ENCODE measurements at regions of chr2 and their contacts with region 1.

Region 1: DNA sequence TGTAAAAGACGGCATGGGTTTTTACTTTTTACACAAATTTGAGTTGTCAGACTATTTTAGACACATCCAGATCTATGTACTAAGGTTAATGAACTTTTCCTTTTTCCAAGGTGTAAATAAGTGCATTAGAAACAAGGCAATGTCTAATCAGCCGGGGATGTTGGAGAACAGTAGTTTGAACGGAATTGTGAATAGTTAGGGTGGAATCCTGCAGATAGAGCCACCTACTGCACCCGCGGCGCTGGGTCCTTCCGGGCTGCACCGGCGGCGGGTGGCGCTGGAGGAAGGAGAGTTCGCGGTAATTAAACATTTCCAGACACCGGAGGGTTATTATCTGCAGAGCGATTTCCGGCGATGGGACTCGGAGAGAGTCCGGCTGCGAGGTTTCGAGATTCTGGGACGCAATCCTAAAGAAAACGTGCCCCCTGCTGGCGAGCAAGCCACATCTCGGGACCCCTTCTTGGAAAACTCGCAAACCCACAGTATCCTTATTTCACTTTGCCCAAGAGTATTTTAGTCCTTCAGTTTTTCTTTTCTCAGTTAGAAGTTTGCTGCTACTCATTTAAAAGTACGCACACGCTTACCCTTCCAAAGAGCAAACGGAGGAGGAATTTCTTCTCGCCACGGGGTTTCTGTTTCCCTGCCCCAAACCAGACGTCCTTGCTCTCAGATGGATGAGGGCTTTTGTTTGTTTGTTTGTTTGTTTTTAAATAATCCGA is 4.5 kb upstream of the OSR1 start:
- DNase-seq: peak; percentile 81 to 88 (median 84)
- H3K4me3 ChIP-seq: peak overlapping the region; percentile 50
- H3K27ac ChIP-seq: no peak overlapping the region
- H3K4me1 ChIP-seq: peaks cover 4% of the 10 kb centered on the region
- H3K27me3 ChIP-seq: no peaks in the 10 kb centered on the region
- CTCF ChIP-seq: peak; percentile 60 to 74 (median 72)
- EP300 ChIP-seq: no peak
- POLR2A ChIP-seq: no peak

Region 2: DNA sequence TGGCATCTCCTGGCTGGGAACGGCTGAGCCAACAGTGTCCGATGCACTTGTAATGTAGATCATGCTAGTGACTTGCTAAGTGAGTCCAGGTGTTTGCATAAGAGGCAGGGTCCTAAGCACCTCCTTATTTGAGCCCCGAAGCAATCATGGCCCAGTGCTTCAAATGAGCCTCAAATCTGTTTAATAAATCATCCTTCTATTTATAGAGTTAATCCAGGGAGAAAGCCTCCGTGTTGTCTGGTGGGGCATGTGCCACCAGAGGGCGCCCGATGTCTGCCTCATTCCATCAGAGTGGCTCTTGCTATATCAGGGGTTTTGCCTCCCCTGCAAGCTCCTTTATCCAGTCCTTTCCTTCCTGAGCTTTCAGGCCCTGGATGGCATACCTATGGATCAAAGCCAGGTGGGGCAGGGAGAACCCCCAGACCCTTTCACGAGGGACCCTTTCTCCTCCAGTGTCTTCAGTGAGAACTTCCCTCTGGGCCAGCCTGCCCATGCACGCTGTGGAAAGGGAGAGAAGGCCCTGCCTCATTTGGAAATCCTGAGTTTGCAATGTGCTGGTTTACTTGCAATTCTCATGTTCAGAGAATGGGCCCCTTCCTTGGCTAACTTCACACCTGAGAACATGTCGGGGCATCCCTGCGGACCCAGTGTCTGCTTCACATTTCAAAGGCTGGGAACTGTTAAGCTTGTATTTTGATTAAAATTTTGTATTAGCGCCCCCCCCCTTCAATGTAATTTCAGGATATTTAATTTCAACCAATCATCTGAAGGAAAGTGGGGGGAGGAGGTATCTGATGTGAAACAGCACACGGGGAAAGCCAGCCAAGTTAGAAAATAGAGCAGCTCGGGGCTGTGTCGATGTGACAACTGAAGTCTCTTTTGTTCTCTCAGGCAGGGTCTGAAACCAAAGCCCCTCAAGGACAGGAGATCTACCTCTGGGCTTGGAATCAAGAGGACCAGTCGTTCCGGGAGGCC is 842.2 kb before region 1 on chr2:
- intact Hi-C with region 1: loop called in 3 of 4 experiments (anchors 5 to 10 kb)
- DNase-seq: peak; percentile 65 to 89 (median 83)
- H3K4me3 ChIP-seq: no peak overlapping the region
- H3K27ac ChIP-seq: no peak overlapping the region
- H3K4me1 ChIP-seq: no peaks in the 10 kb centered on the region
- H3K27me3 ChIP-seq: no peaks in the 10 kb centered on the region
- CTCF ChIP-seq: peak; percentile 55 to 73 (median 66)
- EP300 ChIP-seq: no peak
- POLR2A ChIP-seq: no peak

Region 3: DNA sequence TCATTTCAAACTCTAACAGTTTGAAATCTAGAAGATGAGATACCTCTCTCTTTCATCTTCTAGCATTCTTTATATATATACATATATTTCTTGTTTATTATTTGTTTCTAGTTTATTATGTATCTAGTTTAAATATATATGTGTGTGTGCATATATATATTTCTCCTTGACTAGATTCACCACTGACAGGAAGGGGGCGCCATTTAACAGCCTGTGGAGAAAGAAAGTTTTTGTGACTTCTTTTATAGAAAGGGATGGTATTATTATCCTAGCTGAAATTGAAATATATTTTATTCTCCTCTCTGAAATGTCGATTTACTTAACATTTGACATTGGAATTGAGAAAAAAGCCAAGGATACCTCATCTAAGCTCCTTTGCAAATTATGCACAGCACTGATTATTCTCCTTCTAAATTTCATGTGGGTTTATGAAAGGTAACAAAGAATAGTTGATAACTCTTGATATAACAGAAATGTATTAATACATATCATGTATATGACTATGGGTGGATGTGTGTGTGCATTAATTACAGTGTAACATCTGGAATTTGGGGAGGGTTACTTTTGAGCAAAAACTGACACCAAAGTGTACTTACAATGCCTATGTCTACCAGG is 612.9 kb before region 1 on chr2:
- intact Hi-C with region 1: loop called (anchors 2 to 10 kb)
- DNase-seq: peak; percentile 39 to 67 (median 54)
- H3K4me3 ChIP-seq: no peak overlapping the region
- H3K27ac ChIP-seq: no peak overlapping the region
- H3K4me1 ChIP-seq: no peaks in the 10 kb centered on the region
- H3K27me3 ChIP-seq: no peaks in the 10 kb centered on the region
- CTCF ChIP-seq: peak; percentile 53 to 71 (median 68)
- EP300 ChIP-seq: no peak
- POLR2A ChIP-seq: no peak

Region 4: GRCh38 chr2:19536136-19536535 is 173.2 kb after region 1 on chr2:
- intact Hi-C with region 1: no loop called
- DNase-seq: no peak
- H3K4me3 ChIP-seq: no peak overlapping the region
- H3K27ac ChIP-seq: no peak overlapping the region
- H3K4me1 ChIP-seq: no peaks in the 10 kb centered on the region
- H3K27me3 ChIP-seq: no peaks in the 10 kb centered on the region
- CTCF ChIP-seq: no peak
- EP300 ChIP-seq: no peak
- POLR2A ChIP-seq: no peak

Region 5: DNA sequence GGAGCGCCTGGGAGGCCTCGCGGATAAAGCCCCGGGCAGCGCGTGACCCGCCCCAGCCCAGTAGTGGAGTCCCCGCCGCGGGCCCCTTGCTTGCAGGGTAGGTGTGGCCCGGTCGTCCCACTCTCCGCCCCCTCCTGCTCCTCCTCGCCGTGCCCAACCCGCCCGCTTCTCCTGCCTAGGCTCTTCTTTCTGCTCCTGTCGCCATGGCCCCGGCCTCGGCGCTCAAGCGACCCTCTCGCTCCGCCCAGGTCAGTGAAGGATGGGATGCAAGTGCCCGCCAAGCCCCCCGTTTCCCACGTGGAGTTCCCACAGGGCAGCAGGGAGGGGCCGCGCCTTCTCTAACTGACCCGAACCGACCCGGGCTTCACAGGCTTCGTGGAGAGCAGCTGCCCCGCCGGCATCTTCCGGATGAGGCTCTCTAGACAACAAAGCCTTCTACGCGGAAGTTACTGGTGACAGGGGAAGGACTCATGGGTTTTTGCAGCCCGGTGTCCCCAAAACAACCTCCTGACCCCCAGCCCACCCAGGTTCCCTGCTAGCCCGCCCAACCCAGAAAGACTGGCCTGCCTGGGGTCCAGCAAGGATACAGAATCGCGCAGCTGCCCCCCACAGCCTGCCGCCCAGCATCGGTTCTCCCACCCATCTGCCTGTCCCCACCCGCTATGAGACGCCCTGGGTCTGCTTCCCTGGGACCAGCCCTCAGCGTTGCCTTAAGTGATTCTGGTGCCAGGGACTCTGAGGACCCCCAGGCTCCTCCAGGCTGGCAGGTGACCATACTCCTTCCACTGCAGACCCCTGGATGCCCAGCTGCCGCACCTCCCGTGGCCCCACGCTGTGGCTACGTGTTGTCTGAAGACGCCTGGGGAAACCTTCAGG is 506.0 kb after region 1 on chr2:
- intact Hi-C with region 1: loop called in 2 of 4 experiments (anchors 5 kb)
- DNase-seq: peak; percentile 31 to 67 (median 51)
- H3K4me3 ChIP-seq: peak overlapping the region; percentile 40
- H3K27ac ChIP-seq: no peak overlapping the region
- H3K4me1 ChIP-seq: no peaks in the 10 kb centered on the region
- H3K27me3 ChIP-seq: no peaks in the 10 kb centered on the region
- CTCF ChIP-seq: no peak
- EP300 ChIP-seq: no peak
- POLR2A ChIP-seq: no peak

Region 6: DNA sequence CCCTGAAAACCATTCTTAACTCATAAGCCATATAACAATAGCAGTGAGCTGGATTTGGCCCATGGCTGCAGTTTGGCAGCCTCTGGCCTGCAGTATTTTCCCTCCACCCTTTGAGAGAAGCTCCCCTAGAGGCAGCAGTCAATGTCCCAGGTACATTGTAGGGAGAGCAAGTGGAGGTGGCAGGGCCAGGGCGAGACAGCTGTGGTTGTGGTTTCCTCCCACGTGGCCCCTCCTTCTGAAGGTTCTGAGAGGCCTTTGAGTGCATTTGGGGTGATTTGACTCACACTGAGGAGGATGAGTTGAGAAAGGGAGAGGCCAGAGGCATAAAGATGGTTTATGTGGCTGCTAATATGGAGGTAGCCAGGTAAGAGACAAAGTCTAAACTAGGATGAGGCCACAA is 1505.5 kb after region 1 on chr2:
- intact Hi-C with region 1: no loop called
- DNase-seq: no peak
- H3K4me3 ChIP-seq: no peak overlapping the region
- H3K27ac ChIP-seq: no peak overlapping the region
- H3K4me1 ChIP-seq: no peaks in the 10 kb centered on the region
- H3K27me3 ChIP-seq: no peaks in the 10 kb centered on the region
- CTCF ChIP-seq: no peak
- EP300 ChIP-seq: no peak
- POLR2A ChIP-seq: no peak